Activated B cell treated with CpG ODN at 0.5 μM for 24 hours (primary cell): ENCODE measurements at regions of chr13 and their contacts with region 1.

Region 1: GRCh38 chr13:108212886-108213285 is 2.5 kb downstream of the LIG4 start:
- DNase-seq: no peak
- ATAC-seq: no peak
- H3K4me3 Mint-ChIP-seq: peak overlapping the region; percentile 46
- H3K27ac Mint-ChIP-seq: peak overlapping the region; percentile 75
- H3K4me1 Mint-ChIP-seq: peaks cover 62% of the 10 kb centered on the region
- H3K27me3 Mint-ChIP-seq: no peaks in the 10 kb centered on the region
- CTCF ChIP-seq: no peak

Region 2: GRCh38 chr13:108185223-108185622 is 27.7 kb before region 1 on chr13:
- CTCF ChIA-PET with region 1: no interaction called
- POLR2A ChIA-PET with region 1: no interaction called
- intact Hi-C with region 1: loop called (anchors 1 kb)
- DNase-seq: no peak
- ATAC-seq: peak; percentile 71
- H3K4me3 Mint-ChIP-seq: peak overlapping the region; percentile 24
- H3K27ac Mint-ChIP-seq: peak overlapping the region; percentile 88
- H3K4me1 Mint-ChIP-seq: peaks cover 29% of the 10 kb centered on the region
- H3K27me3 Mint-ChIP-seq: peaks cover 2% of the 10 kb centered on the region
- CTCF ChIP-seq: no peak